ENCODE measurements at regions of chr6 and their contacts with region 1.

Region 1: DNA sequence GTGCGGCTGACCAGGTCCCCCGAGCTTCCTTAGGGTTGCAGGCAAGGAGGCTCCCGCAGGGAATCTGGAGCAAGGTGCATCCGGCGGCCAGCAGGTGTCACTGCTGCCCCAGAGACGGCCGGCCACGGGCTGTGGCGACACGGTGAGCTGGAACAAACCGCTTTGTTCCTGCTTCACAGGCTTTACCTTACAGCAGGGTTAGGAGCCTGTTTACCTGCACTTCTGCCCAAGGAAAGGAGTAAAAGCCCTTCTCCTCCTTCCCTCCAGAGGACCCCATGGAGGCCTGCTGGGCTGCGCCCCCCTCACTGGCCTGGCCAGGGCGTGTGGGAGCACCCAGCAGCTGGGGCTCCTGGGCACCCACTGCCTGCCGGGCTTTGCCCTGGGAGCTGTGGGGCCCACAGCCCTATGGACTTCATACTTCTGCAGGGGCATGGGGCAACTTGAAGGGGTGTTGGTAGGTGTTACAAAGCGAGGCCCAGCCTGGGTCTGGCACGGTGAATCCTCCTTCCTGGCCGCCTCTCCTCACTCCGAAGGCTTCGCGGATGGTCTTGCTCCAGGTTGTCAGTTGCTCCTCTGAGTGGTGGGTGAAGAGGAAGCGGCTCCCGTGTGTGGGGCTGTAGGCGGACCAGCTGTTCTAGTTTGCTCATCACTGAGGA is 88.4 kb downstream of the CDC5L start:
- DNase-seq: peak; percentile 75
- ATAC-seq: peak; percentile 90
- H3K4me3 Mint-ChIP-seq: no peak overlapping the region
- H3K27ac Mint-ChIP-seq: no peak overlapping the region
- H3K4me1 Mint-ChIP-seq: peaks cover 5% of the 10 kb centered on the region
- H3K27me3 Mint-ChIP-seq: peaks cover 6% of the 10 kb centered on the region

Region 2: GRCh38 chr6:44446628-44447306 is 29.1 kb before region 1 on chr6:
- CTCF ChIA-PET with region 1: interaction called, 13 read pairs
- POLR2A ChIA-PET with region 1: no interaction called
- DNase-seq: no peak
- ATAC-seq: no peak
- H3K4me3 Mint-ChIP-seq: no peak overlapping the region
- H3K27ac Mint-ChIP-seq: no peak overlapping the region
- H3K4me1 Mint-ChIP-seq: peaks cover 6% of the 10 kb centered on the region
- H3K27me3 Mint-ChIP-seq: no peaks in the 10 kb centered on the region

Region 3: DNA sequence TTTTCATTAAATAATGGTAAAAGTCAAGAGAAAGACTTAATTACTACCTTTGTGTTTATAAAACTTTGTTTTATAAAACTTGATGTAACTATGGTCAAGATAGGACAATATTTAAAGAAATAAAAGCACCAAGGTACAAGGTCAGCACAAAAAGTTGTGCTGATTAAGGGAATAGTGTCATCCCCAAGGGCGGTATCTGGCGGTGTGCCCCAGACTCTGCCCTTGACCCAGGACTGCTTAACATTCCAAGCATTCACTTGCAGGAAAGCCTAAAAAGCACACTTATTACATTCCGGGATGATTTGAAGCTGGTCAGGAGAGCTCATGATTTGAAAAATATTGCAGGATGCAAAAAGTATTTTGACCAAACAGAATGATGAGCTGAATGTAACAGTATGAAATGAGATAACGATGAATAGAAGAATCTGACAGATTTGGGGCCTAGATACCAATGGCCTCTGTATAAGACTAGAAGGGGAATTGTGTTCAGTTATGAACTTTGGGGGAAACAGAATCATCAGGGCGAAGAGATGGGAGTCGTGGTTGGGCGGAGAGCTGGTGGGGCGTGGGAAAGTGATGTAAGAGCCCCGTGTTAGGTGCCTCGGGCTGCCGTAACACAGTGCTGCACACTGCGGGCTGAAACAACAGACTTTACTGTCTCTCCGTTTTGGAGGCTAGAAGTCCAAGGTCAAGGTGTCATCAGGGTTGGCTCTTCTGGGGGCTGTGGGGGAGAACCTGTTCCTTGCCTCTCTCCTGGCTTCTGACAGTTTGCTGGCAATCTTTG is 11.2 kb before region 1 on chr6:
- CTCF ChIA-PET with region 1: interaction called, 52 read pairs
- POLR2A ChIA-PET with region 1: no interaction called
- DNase-seq: no peak
- ATAC-seq: no peak
- H3K4me3 Mint-ChIP-seq: no peak overlapping the region
- H3K27ac Mint-ChIP-seq: no peak overlapping the region
- H3K4me1 Mint-ChIP-seq: no peaks in the 10 kb centered on the region
- H3K27me3 Mint-ChIP-seq: peaks cover 2% of the 10 kb centered on the region

Region 4: DNA sequence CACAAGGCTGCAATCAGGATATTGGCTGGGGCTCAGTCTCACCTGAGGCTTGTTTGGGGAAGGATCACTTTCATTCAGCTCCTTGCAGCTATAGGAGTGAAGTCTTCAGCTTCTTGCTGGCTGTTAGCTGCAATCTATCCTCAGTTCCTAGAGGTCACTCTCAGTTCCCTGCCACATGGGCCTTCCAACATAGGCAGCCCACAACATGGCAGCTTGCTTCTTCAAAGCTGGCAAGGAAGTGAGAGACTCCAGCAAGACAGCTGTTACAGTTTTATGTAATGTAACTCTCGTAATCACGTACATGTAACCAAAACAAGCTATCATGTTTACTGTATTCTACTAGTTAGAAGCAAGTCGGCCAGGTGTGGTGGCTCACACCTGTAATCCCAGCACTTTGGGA is 138.5 kb after region 1 on chr6:
- CTCF ChIA-PET with region 1: interaction called, 13 read pairs
- POLR2A ChIA-PET with region 1: no interaction called
- DNase-seq: no peak
- ATAC-seq: no peak
- H3K4me3 Mint-ChIP-seq: no peak overlapping the region
- H3K27ac Mint-ChIP-seq: no peak overlapping the region
- H3K4me1 Mint-ChIP-seq: no peaks in the 10 kb centered on the region
- H3K27me3 Mint-ChIP-seq: peaks cover 3% of the 10 kb centered on the region

Region 5: GRCh38 chr6:44645276-44645675 is 169.4 kb after region 1 on chr6:
- CTCF ChIA-PET with region 1: interaction called, 13 read pairs
- POLR2A ChIA-PET with region 1: no interaction called
- DNase-seq: no peak
- ATAC-seq: no peak
- H3K4me3 Mint-ChIP-seq: no peak overlapping the region
- H3K27ac Mint-ChIP-seq: no peak overlapping the region
- H3K4me1 Mint-ChIP-seq: peaks cover 4% of the 10 kb centered on the region
- H3K27me3 Mint-ChIP-seq: no peaks in the 10 kb centered on the region

Region 6: GRCh38 chr6:45922728-45923351 is 1446.9 kb after region 1 on chr6:
- CTCF ChIA-PET with region 1: interaction called, 48 read pairs
- POLR2A ChIA-PET with region 1: no interaction called
- DNase-seq: peak; percentile 73
- ATAC-seq: peak; percentile 63
- H3K4me3 Mint-ChIP-seq: no peak overlapping the region
- H3K27ac Mint-ChIP-seq: no peak overlapping the region
- H3K4me1 Mint-ChIP-seq: peaks cover 20% of the 10 kb centered on the region
- H3K27me3 Mint-ChIP-seq: no peaks in the 10 kb centered on the region